ENCODE measurements at regions of chr6 and their contacts with region 1.

Region 1: GRCh38 chr6:166786704-166787293 is 159.7 kb upstream of the RPS6KA2 start:
- DNase-seq: no peak

Region 2: GRCh38 chr6:166999145-166999883 is 212.5 kb after region 1 on chr6 and contains the start of gene CEP43:
- intact Hi-C with region 1: loop called in 1 of 2 experiments (anchors 10 kb)
- DNase-seq: peak; percentile 98
- total RNA-seq, gene CEP43: 7.9 to 8.7 TPM